ENCODE measurements at regions of chr11 and their contacts with region 1.

Region 1: DNA sequence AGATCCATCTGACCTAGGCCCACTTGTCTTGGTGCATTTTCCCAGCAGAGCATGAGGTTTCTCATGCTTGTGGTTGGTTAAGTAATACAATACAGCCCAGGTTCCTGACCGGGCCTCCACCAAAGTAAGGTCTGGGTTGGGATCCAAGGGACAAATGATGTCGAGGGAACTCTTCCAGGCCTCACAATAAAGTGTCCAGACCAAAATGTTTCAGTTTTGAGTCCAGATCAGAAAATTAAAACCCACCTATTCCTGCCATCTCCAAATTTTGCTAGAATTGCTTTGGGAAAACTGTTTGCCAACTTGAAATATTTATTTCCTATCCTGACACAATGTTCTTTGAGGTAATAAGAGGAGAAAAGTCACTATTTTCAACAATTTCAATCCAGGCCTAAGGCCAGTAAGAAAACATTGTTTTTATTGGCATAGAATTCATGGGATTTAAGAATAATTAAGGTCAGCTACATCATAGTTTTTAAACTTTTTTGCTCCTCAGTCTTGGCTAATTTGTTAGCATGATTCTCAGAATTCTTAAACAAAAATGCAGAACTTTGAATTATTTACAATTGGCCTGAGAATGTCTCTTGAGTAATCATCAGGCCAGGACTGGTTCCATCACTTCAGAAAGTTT is 51.4 kb downstream of the ME3 start:
- DNase-seq: no peak
- H3K4me3 ChIP-seq: no peak overlapping the region
- H3K27ac ChIP-seq: peak overlapping the region; percentile 42 to 73 (median 70)
- H3K4me1 ChIP-seq: peaks cover 27 to 68% (median 62%) of the 10 kb centered on the region in 4 donors
- H3K27me3 ChIP-seq: no peaks in the 10 kb centered on the region
- CTCF ChIP-seq: no peak
- EP300 ChIP-seq: no peak
- POLR2A ChIP-seq: no peak

Region 2: DNA sequence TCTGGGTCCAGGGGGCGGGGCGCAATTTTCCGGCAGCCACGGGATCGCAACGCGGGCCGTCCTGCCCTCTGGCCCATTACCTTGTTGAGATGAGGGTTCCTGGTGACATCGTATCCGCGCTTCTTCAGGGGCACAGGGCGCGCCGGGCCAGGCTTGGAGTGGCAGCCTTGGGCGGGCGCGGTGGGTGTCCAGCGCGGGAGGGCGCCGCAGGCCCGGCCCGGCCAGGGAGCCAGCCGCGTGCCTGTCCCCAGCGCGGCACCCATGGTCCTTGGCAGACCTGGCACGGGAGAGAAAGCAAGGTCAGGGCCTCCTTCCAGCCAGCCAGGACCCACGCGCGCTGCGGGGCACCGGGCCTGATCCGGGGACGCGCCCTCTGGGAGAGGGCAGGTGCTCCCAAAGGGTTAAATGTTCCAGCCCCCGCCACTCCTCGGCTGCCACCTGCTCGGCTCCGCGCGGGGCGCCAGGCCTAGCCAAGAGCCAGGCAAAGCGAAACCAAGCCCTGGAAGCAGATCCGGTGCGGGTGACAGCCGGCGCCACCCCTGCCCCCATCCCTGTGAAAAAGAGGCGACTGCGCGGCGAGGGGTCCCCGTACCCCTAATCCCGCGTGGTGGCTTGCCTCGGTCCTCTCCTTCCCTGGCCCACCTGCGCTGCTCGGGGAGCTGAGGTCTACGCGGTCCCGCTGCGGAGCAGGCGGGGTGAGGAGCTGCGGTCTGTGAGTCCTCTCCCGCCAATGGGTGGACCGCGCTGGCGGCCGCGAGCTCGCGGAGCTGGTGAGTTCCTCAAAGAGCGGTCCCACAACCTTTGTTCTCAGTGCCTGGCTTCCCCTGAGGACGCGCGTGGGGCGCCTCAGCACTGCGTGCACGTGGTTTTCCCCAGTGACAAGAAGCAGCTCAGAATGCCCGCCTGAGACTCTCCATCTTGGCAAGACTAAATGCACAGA is 50.9 kb after region 1 on chr11 and contains the start of gene ME3:
- intact Hi-C with region 1: loop called (anchors 5 kb)
- DNase-seq: no peak
- H3K4me3 ChIP-seq: peak within 1 kb of the TSS; percentile 65 to 88 (median 74)
- H3K27ac ChIP-seq: peak within 1 kb of the TSS; percentile 89 to 98 (median 94)
- H3K4me1 ChIP-seq: peaks cover 24 to 68% (median 56%) of the 10 kb centered on the region in 4 donors
- H3K27me3 ChIP-seq: no peaks in the 10 kb centered on the region
- CTCF ChIP-seq: no peak
- EP300 ChIP-seq: no peak
- POLR2A ChIP-seq: no peak
- total RNA-seq, gene ME3: 20.4 to 50.1 (median 26.2) TPM

Region 3: GRCh38 chr11:86735462-86736302 is 114.7 kb after region 1 on chr11:
- intact Hi-C with region 1: loop called (anchors 5 kb)
- DNase-seq: no peak
- H3K4me3 ChIP-seq: no peak overlapping the region
- H3K27ac ChIP-seq: no peak overlapping the region
- H3K4me1 ChIP-seq: peaks cover 24 to 50% (median 40%) of the 10 kb centered on the region in 4 donors
- H3K27me3 ChIP-seq: no peaks in the 10 kb centered on the region
- CTCF ChIP-seq: no peak
- EP300 ChIP-seq: no peak
- POLR2A ChIP-seq: no peak

Measured in esophagus muscularis mucosa (tissue), 4 donors.